CD4-positive, alpha-beta T cell (primary cell): ENCODE measurements at regions of chr11 and their contacts with region 1.

Region 1: DNA sequence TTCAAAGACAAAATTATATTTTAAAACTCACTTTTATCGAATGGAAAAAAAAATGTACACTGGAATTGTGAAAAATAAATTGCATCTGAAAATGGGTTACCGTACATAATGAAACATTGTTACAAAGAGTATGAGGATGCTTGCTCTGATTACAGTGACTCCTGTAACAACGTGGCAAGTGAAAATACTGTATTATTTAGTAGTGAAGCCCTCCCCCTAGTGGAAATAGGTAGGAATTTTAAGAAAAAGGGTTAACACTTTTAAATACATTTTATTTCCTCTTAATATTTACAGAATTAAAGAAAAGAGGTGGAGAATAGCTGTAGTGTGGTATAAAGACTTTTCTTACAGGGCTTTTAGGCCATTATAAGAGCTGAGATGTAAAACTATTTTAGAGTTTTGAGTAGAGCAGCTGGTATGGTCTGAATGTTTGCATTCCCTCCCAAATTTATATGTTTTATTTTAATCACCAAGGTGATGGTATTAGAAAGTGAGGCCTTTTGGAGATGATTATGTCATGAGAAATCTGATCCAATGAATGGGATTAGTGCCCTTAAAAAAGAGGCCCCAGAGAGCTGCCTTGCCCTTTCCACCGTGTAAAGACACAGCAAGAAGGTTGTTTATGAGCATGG is 25.2 kb downstream of the FAM76B start:
- DNase-seq: peak in 3 of 14 experiments; percentile 73 to 76 (median 75)
- ATAC-seq: peak; percentile 91
- H3K4me3 ChIP-seq: no peak overlapping the region
- H3K4me3 Mint-ChIP-seq: no peak overlapping the region
- H3K27ac ChIP-seq: no peak overlapping the region
- H3K27ac Mint-ChIP-seq: no peak overlapping the region
- H3K4me1 ChIP-seq: no peaks in the 10 kb centered on the region
- H3K4me1 Mint-ChIP-seq: no peaks in the 10 kb centered on the region
- H3K27me3 ChIP-seq: no peaks in the 10 kb centered on the region
- H3K27me3 Mint-ChIP-seq: no peaks in the 10 kb centered on the region
- CTCF ChIP-seq: peak; percentile 80

Region 2: GRCh38 chr11:94519478-94520084 is 1244.8 kb before region 1 on chr11:
- CTCF ChIA-PET with region 1: no interaction called
- POLR2A ChIA-PET with region 1: no interaction called
- intact Hi-C with region 1: loop called in 1 of 2 experiments (anchors 5 kb)
- DNase-seq: peak in 4 of 14 experiments; percentile 24 to 61 (median 50)
- ATAC-seq: peak; percentile 44
- H3K4me3 ChIP-seq: no peak overlapping the region
- H3K4me3 Mint-ChIP-seq: no peak overlapping the region
- H3K27ac ChIP-seq: no peak overlapping the region
- H3K27ac Mint-ChIP-seq: no peak overlapping the region
- H3K4me1 ChIP-seq: no peaks in the 10 kb centered on the region
- H3K4me1 Mint-ChIP-seq: no peaks in the 10 kb centered on the region
- H3K27me3 ChIP-seq: peaks cover 3 to 8% of the 10 kb centered on the region in 2 experiments
- H3K27me3 Mint-ChIP-seq: peaks cover 31% of the 10 kb centered on the region
- CTCF ChIP-seq: peak; percentile 86

Region 3: DNA sequence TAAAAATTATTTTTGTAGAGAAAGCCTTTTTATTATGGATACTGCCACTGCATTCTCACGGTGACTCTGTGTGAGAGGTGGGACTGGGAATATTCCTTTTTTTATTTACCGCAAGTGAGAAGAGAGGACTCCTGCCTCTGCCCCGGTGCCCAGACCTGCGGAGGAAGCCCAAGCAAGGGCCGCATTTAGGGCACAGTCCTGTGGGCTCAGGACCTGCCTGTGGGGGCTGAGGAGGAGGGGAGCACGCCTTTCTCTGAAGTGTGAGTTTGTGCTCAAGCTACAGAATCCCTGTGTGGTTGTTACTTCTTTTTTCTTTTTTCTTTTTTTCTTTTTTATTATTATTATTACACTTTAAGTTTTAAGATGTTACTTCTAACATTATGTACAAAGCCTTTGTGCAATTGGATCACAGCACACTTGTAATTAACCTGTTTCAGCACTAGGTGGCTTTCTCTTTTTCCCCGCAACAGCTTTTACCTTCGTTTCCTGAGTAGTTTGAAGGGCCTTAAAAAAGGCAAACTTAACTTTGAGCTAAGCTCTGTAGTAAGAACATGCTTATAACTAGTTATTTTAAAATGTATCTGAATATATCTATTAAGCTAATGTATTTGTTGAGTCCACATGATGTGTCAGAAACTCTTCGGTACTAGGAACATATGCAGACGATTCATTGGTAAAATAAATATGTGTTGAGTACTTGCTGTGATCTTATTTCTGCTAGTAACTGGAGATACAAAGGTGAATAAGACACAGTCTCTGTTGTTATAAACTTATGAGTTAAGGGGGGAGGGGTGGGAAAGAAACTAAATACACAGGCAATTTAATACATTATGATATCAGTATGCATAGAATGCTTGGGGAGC is 977.9 kb before region 1 on chr11:
- CTCF ChIA-PET with region 1: no interaction called
- POLR2A ChIA-PET with region 1: no interaction called
- intact Hi-C with region 1: loop called (anchors 5 to 10 kb)
- DNase-seq: peak in 3 of 14 experiments; percentile 24 to 42 (median 36)
- ATAC-seq: peak; percentile 57
- H3K4me3 ChIP-seq: no peak overlapping the region
- H3K4me3 Mint-ChIP-seq: no peak overlapping the region
- H3K27ac ChIP-seq: no peak overlapping the region
- H3K27ac Mint-ChIP-seq: no peak overlapping the region
- H3K4me1 ChIP-seq: no peaks in the 10 kb centered on the region
- H3K4me1 Mint-ChIP-seq: no peaks in the 10 kb centered on the region
- H3K27me3 ChIP-seq: peaks cover 0 to 12% of the 10 kb centered on the region in 2 experiments
- H3K27me3 Mint-ChIP-seq: peaks cover 11% of the 10 kb centered on the region
- CTCF ChIP-seq: peak; percentile 60

Region 4: GRCh38 chr11:95089620-95090542 is 674.5 kb before region 1 on chr11 and contains the start of gene ENDOD1:
- CTCF ChIA-PET with region 1: no interaction called
- POLR2A ChIA-PET with region 1: no interaction called
- intact Hi-C with region 1: loop called in 1 of 2 experiments (anchors 5 kb)
- DNase-seq: peak; percentile 70 to 94 (median 84)
- ATAC-seq: peak; percentile 94
- H3K4me3 ChIP-seq: peak within 1 kb of the TSS; percentile 78
- H3K4me3 Mint-ChIP-seq: peak within 1 kb of the TSS; percentile 92
- H3K27ac ChIP-seq: peak within 1 kb of the TSS; percentile 77 to 84
- H3K27ac Mint-ChIP-seq: peak within 1 kb of the TSS; percentile 95
- H3K4me1 ChIP-seq: peaks cover 34% of the 10 kb centered on the region
- H3K4me1 Mint-ChIP-seq: peaks cover 50% of the 10 kb centered on the region
- H3K27me3 ChIP-seq: no peaks in the 10 kb centered on the region
- H3K27me3 Mint-ChIP-seq: no peaks in the 10 kb centered on the region
- CTCF ChIP-seq: no peak
- total RNA-seq, gene ENDOD1: 3.8 to 4.4 TPM

Region 5: GRCh38 chr11:95705485-95706124 is 58.8 kb before region 1 on chr11:
- CTCF ChIA-PET with region 1: interaction called, 4 read pairs
- POLR2A ChIA-PET with region 1: no interaction called
- intact Hi-C with region 1: loop called (anchors 5 kb)
- DNase-seq: peak; percentile 76 to 93 (median 85)
- ATAC-seq: peak; percentile 92
- H3K4me3 ChIP-seq: no peak overlapping the region
- H3K4me3 Mint-ChIP-seq: no peak overlapping the region
- H3K27ac ChIP-seq: peak overlapping the region; percentile 33 to 54
- H3K27ac Mint-ChIP-seq: no peak overlapping the region
- H3K4me1 ChIP-seq: peaks cover 33% of the 10 kb centered on the region
- H3K4me1 Mint-ChIP-seq: peaks cover 11% of the 10 kb centered on the region
- H3K27me3 ChIP-seq: no peaks in the 10 kb centered on the region
- H3K27me3 Mint-ChIP-seq: no peaks in the 10 kb centered on the region
- CTCF ChIP-seq: peak; percentile 94